Posterior vena cava (tissue), 2 donors: ENCODE measurements at regions of chr18 and their contacts with region 1.

Region 1: GRCh38 chr18:62372156-62372555 is 47.0 kb downstream of the TNFRSF11A start:
- DNase-seq: no peak

Region 2: DNA sequence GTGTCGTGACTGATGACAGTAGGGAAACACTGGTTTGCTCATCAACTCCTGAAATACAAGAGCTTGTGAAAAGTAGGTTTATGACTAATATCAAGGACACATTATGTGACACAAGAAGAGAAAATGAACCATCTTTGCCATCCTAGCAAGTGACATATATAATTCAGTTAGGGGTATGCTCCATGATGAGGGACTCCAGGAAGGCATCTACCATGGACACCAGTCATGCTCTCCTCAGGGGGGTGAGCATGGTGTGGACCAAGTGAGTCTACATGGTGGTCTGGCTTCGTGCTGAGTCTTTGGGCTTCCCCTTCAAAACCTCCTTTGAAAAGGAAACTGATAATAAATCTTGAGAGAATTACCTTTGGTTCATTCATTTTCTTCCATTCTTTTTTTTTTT is 1092.9 kb after region 1 on chr18:
- intact Hi-C with region 1: loop called in 1 of 2 experiments (anchors 5 kb)
- DNase-seq: no peak